ENCODE measurements at regions of chr22 and their contacts with region 1.

Region 1: GRCh38 chr22:41998361-41999275 is at the start of gene WBP2NL:
- DNase-seq: peak; percentile 72 to 89
- H3K4me3 ChIP-seq: peak within 1 kb of the TSS; percentile 76
- H3K27ac ChIP-seq: no peak within 1 kb of the TSS
- H3K4me1 ChIP-seq: peaks cover 16% of the 10 kb centered on the region
- H3K27me3 ChIP-seq: peaks cover 3% of the 10 kb centered on the region; the same call in 1 of the 2 replicates
- CTCF ChIP-seq: no peak
- total RNA-seq, gene WBP2NL: 7.1 and 12.2 TPM in 2 replicates

Region 2: DNA sequence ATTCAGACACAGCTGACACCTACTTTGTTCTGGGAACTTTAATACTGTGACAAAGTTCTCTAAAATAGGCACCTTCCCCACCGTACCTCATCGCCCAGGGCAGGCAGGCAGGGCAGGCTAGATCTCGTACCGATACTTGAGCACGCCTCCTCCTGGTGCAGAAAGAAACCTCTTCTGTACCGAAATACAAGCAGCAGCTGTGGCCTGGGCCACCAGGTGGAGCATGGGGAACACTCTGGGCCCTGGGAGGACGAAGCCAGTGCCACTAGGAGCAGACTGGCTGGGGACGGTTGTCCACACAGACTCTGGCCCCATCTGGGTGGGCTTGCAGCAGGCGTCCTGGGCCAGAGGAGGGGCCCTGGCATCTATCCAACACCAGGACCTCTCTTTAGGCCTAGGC is 421.7 kb before region 1 on chr22:
- CTCF ChIA-PET with region 1: no interaction called
- POLR2A ChIA-PET with region 1: no interaction called
- intact Hi-C with region 1: no loop called
- DNase-seq: peak; percentile 63 to 67
- H3K4me3 ChIP-seq: no peak overlapping the region
- H3K27ac ChIP-seq: no peak overlapping the region
- H3K4me1 ChIP-seq: no peaks in the 10 kb centered on the region
- H3K27me3 ChIP-seq: no peaks in the 10 kb centered on the region
- CTCF ChIP-seq: peak; percentile 88

Region 3: DNA sequence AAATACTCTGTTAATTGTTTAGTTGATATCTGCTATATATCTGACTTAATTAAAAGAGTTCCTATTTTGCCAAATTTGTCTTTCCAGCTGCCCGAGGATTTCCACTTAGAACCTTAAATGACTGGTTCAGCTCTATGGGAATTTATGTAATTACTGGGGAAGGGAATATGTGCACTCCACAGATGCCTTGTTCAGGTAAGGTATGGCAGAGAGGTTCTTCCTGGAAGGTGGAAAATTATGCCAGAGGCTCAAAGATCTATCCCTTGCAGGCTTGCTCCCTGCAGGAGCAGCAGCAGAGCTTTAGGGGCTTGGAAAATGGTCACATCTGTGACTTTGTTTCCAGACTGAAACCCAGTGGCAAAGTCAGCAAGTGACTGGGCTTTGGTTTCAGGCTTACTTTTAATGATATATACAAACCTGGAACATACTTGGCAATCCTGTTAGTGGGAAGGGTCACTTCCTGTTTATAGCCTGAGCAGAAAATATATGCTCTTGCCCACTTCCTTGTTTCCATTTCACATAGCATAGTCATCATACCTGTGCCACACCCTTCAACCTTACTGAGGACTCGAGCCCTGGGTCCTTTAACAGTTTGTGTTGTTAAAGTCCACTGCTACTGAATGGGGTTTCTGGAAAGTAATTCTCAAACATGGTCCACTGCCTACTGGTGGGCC is 23.7 kb after region 1 on chr22:
- CTCF ChIA-PET with region 1: no interaction called
- POLR2A ChIA-PET with region 1: no interaction called
- intact Hi-C with region 1: loop called (anchors 1 kb)
- DNase-seq: peak; percentile 28 to 89
- H3K4me3 ChIP-seq: no peak overlapping the region
- H3K27ac ChIP-seq: peak overlapping the region; percentile 90
- H3K4me1 ChIP-seq: peaks cover 19% of the 10 kb centered on the region
- H3K27me3 ChIP-seq: no peaks in the 10 kb centered on the region
- CTCF ChIP-seq: no peak

Region 4: DNA sequence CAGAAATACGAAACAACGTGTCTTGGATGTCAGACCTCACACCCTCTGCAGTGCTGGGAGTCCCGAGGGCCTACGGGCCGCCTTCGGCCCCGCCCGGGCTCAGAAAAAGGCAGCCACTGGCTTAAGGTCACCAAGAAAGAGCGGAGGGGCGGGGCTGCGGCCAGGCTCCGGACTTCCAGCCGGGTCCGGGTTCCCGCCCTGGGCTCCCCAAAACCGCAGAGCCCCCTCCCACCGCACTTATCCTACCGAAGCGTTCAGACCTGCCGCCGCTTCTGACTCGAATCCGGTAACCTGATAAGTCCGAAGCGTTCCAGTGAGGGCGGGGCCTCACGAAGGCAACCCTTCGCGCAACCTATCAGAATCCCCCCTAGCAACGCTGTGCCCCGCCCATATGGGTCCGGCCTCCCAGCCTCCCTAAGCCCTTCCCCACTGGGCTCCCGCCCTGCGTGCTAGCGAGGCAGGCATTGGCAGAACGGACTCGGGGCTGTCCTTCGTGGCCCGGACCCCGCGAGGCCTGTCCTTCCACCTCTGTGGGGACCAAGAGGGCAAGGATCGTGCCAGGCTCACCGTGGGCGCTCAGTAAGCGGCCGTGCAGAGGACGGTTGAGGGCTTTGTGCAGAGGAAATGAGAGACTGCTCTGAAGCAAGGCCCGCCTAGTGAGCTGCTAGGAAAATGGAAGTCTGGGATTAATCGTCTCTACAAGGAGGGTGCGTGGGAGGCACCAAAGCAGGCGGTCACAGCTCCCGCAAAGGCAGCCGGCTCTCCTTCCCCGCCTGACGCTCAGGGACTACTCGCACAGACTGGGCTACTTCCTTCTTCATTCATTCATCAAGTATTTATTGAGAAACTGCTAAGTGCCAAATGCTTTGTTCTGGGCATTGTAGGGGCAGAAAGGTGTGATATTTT is 72.2 kb after region 1 on chr22 and contains the start of gene NAGA:
- CTCF ChIA-PET with region 1: no interaction called
- POLR2A ChIA-PET with region 1: no interaction called
- intact Hi-C with region 1: loop called (anchors 2 kb)
- DNase-seq: peak; percentile 94 to 96
- H3K4me3 ChIP-seq: peak within 1 kb of the TSS; percentile 59
- H3K27ac ChIP-seq: peak within 1 kb of the TSS; percentile 42
- H3K4me1 ChIP-seq: peaks cover 16% of the 10 kb centered on the region
- H3K27me3 ChIP-seq: no peaks in the 10 kb centered on the region
- CTCF ChIP-seq: no peak
- total RNA-seq, gene NAGA: 13.8 and 15.9 TPM in 2 replicates

Measured in PC-9 (cell line).